OCI-LY7 (cell line): ENCODE measurements at regions of chr18 and their contacts with region 1.

Region 1: GRCh38 chr18:12038639-12039417 is 54.8 kb upstream of the ANKRD62 start:
- DNase-seq: peak; percentile 80
- H3K4me3 ChIP-seq: peak overlapping the region; percentile 70
- H3K27ac ChIP-seq: no peak overlapping the region
- H3K4me1 ChIP-seq: peaks cover 13% of the 10 kb centered on the region
- CTCF ChIP-seq: peak; percentile 89

Region 2: DNA sequence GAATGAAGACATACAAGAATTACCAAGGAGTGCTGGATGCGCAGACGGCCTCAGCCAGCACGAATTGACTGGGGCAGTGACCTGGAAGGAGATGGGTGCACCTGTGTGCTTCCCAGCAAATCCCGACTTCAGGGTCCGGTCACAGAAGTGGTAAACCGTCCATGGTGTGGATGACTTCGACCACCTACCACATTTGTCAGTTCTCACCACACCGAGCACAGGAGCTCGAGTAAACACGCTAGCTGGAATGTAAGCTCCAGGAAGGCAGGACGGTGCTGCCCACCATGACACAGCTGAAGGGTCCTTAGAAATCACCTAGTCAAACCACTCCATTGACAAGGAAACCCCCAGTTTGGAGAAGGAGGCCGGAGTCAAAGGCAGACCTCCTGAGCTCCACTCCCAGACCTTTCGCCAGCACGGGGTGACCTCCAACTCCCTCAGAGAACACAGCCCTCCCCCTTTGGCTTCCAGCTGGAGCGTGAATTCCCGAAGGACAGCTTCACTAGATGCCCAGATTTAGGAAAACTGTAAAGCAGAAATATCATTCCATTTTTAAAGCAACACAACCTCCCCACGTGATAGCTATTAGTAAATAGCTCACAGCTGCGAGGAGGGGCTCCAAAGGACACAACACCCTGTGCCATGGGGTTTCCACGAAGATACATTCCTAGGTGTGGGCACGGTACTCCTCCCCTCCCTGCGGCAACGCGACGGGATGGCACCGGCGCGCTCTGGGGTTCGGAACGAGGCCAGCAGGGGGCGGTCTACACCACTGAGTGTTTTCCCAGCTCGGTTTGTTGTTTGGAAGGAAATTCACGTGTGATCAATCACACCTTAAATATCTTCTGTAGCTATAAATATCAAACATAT is 383.9 kb before region 1 on chr18:
- CTCF ChIA-PET with region 1: interaction called, 4 read pairs
- POLR2A ChIA-PET with region 1: no interaction called
- intact Hi-C with region 1: loop called (anchors 5 kb)
- DNase-seq: peak; percentile 53
- H3K4me3 ChIP-seq: no peak overlapping the region
- H3K27ac ChIP-seq: no peak overlapping the region
- H3K4me1 ChIP-seq: no peaks in the 10 kb centered on the region
- CTCF ChIP-seq: peak; percentile 91

Region 3: GRCh38 chr18:11733031-11733430 is 305.8 kb before region 1 on chr18:
- CTCF ChIA-PET with region 1: interaction called, 5 read pairs
- POLR2A ChIA-PET with region 1: no interaction called
- intact Hi-C with region 1: loop called (anchors 1 kb)
- DNase-seq: peak; percentile 71
- H3K4me3 ChIP-seq: peak overlapping the region; percentile 21
- H3K27ac ChIP-seq: no peak overlapping the region
- H3K4me1 ChIP-seq: no peaks in the 10 kb centered on the region
- CTCF ChIP-seq: peak; percentile 93

Region 4: GRCh38 chr18:11883153-11883552 is 155.7 kb before region 1 on chr18:
- CTCF ChIA-PET with region 1: no interaction called
- POLR2A ChIA-PET with region 1: no interaction called
- intact Hi-C with region 1: loop called (anchors 5 kb)
- DNase-seq: peak; percentile 86
- H3K4me3 ChIP-seq: peak overlapping the region; percentile 31
- H3K27ac ChIP-seq: peak overlapping the region; percentile 75
- H3K4me1 ChIP-seq: peaks cover 39% of the 10 kb centered on the region
- CTCF ChIP-seq: no peak

Region 5: DNA sequence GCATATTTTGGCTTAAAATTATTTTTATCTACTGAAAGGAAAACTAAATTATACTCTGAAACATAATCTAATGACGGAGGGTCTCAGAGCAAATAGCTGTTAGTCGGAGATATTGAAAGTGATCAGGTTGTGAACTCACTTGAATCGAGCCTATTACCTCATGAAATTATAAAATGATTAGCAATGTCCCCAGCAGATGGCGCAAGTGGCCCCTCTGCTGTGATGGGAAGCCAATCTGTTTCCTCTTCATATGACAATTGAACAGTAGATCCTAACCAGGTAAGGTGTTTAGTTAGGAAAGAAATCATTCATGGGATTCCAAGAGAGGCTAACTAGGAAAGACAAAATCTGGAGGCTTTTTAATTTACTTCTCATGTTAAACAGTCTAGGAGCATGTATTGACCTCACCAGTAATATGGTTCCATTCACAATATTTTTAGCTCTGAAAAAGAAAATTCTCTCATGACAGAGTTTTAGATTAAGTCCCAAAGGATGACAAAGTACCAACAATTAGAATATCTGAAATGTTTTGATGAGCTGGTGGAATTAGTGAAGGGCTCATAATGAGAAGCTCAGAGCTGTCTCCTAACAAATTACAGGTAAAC is 100.9 kb before region 1 on chr18:
- CTCF ChIA-PET with region 1: no interaction called
- POLR2A ChIA-PET with region 1: no interaction called
- intact Hi-C with region 1: loop called (anchors 1 kb)
- DNase-seq: peak; percentile 75
- H3K4me3 ChIP-seq: no peak overlapping the region
- H3K27ac ChIP-seq: no peak overlapping the region
- H3K4me1 ChIP-seq: no peaks in the 10 kb centered on the region
- CTCF ChIP-seq: peak; percentile 94

Region 6: GRCh38 chr18:11983592-11983991 is 55.2 kb before region 1 on chr18:
- CTCF ChIA-PET with region 1: no interaction called
- POLR2A ChIA-PET with region 1: no interaction called
- intact Hi-C with region 1: no loop called
- DNase-seq: no peak
- H3K4me3 ChIP-seq: no peak overlapping the region
- H3K27ac ChIP-seq: no peak overlapping the region
- H3K4me1 ChIP-seq: peaks cover 15% of the 10 kb centered on the region
- CTCF ChIP-seq: no peak

Region 7: GRCh38 chr18:11995445-11996189 is 43.2 kb before region 1 on chr18:
- CTCF ChIA-PET with region 1: interaction called, 4 read pairs
- POLR2A ChIA-PET with region 1: interaction called, 3 read pairs
- intact Hi-C with region 1: loop called (anchors 5 kb)
- DNase-seq: peak; percentile 76
- H3K4me3 ChIP-seq: peak overlapping the region; percentile 20
- H3K27ac ChIP-seq: peak overlapping the region; percentile 25
- H3K4me1 ChIP-seq: peaks cover 28% of the 10 kb centered on the region
- CTCF ChIP-seq: peak; percentile 89